Right cardiac atrium (tissue), 5 donors: ENCODE measurements at regions of chr7 and their contacts with region 1.

Region 1: DNA sequence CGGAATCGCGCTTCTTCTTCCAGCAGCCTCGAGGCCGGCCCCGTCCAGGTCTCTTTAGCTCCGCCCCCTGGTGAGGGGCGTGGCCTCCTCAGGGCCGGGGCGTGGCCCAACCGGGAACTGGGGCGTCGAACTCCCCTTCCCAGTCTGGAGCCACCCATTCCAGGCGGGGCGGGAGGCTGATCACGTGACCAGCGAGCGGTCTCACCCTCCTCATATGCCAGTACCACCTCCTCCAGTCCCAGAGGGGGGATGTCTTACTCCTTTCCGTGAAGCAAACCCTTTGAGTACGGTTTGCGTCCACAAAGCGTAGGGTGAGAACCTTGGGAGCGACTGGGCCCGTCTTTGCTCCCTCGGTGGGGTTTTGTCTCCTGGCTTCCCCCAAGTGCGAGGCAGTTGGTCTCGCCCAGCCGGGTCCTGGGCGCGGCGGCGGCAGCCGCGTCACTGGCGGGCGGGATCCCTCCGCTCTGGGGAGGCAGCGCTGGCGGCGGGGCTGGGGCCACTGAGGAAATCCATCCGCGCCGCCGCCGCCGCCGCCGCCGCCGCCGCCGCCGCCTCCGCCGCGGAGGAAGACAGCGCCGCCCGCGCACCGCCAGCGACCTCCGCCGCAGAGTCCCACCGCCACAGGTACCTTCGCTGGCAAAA is at the start of gene GNB2:
- DNase-seq: peak; percentile 99 to 100 (median 100)
- ATAC-seq: peak; percentile 90 to 93
- H3K4me3 ChIP-seq: peak within 1 kb of the TSS; percentile 96
- H3K27ac ChIP-seq: peak within 1 kb of the TSS; percentile 96
- H3K4me1 ChIP-seq: no peaks in the 10 kb centered on the region
- H3K27me3 ChIP-seq: no peaks in the 10 kb centered on the region
- total RNA-seq, gene GNB2: 128 to 160 (median 132) TPM

Region 2: DNA sequence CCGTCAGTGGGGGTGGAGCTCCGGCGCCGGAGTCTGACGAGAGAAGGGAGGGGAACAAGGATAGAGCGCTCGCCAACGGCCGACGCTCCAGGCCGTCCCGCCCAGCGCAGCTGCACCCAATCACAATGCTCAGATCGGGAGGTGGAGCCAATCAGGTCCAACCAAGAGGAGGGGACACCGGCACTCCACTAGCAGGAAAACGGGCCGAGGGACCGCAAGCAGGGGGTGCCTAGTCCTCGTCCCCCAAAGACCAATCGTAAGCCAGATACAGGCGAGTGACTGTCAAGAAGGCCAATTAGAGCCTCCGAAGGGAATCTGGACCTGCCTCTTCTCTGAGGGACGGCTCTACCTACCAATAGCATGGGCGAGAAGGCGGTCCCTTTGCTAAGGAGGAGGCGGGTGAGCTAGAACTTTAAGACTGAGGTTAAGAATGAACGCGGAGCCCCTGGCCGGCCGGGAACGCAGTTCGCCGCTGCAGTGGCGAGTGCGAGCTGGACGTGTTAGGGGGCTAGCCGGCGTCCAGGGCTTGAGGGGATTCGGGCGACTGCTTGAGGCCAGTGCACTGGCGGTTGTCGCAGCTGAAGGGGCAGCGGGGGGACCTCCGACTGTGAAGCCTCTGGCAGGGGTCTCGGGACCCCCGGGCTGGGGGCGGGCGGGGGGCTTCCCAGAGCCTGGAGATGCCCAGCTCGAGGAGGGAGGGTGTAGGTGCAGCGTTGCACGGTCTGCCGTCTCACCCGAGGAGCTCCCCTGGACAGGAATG is 87.0 kb before region 1 on chr7 and contains the start of gene FBXO24:
- intact Hi-C with region 1: loop called in 1 of 4 experiments (anchors 10 kb)
- DNase-seq: peak; percentile 100
- ATAC-seq: peak; percentile 94 to 97
- H3K4me3 ChIP-seq: peak within 1 kb of the TSS; percentile 76
- H3K27ac ChIP-seq: peak within 1 kb of the TSS; percentile 93
- H3K4me1 ChIP-seq: peaks cover 2% of the 10 kb centered on the region
- H3K27me3 ChIP-seq: no peaks in the 10 kb centered on the region
- total RNA-seq, gene FBXO24: 0.74 to 1.0 (median 0.76) TPM in 3 of 4 donors, not detected in the other

Region 3: GRCh38 chr7:100611974-100612729 is 61.3 kb before region 1 on chr7 and contains the start of gene MOSPD3:
- intact Hi-C with region 1: loop called in 2 of 4 experiments (anchors 5 to 10 kb)
- DNase-seq: peak; percentile 99
- ATAC-seq: peak; percentile 98 to 99
- H3K4me3 ChIP-seq: peak within 1 kb of the TSS; percentile 87
- H3K27ac ChIP-seq: peak within 1 kb of the TSS; percentile 89
- H3K4me1 ChIP-seq: peaks cover 3% of the 10 kb centered on the region
- H3K27me3 ChIP-seq: no peaks in the 10 kb centered on the region
- total RNA-seq, gene MOSPD3: 11.1 to 13.7 (median 11.9) TPM

Region 4: DNA sequence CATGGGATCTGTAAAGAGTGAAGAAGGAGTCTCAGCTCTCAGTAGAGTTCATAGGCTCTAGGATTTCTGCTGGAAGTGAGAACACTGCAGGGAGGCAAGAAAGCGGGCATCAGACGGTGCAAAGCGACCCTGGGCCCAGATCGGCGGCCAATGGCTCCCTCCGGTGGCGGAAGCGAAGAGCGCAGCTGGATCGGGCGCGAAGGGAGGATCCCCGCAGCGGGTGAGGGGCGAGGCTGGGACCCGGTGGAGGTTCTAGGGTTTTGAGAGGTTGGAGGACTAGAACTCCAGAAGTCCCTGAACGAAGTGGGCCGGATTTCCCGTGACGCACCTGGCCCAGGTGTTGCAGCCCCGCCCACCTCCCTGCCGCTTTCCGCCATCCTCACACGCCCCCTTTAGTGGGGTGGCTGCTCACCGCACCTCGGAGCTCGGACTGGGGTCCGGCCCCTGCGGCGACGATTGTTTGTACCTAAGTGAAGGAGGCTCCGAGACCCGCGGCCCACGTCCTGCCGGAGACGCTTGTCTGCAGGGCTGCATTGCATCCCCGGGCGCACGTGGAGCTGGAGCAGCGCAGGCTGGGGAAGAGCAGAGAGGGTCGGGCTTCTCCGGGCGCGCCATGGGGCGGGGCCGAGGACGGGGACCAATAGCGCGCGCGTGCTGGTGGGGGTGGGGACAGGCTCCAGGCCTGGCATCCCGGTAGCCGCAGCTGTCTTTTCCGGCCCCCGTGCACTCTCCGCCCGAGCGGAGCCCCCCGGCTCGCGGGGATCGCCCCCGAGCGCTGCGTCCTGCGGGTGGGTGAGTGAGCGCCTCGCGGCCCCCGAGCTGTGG is 178.8 kb after region 1 on chr7 and contains the start of gene SLC12A9:
- intact Hi-C with region 1: no loop called
- DNase-seq: peak; percentile 94 to 97 (median 97)
- ATAC-seq: peak; percentile 99
- H3K4me3 ChIP-seq: peak within 1 kb of the TSS; percentile 55
- H3K27ac ChIP-seq: no peak within 1 kb of the TSS
- H3K4me1 ChIP-seq: no peaks in the 10 kb centered on the region
- H3K27me3 ChIP-seq: no peaks in the 10 kb centered on the region
- total RNA-seq, gene SLC12A9: 9.3 to 16.9 (median 12.6) TPM

Region 5: DNA sequence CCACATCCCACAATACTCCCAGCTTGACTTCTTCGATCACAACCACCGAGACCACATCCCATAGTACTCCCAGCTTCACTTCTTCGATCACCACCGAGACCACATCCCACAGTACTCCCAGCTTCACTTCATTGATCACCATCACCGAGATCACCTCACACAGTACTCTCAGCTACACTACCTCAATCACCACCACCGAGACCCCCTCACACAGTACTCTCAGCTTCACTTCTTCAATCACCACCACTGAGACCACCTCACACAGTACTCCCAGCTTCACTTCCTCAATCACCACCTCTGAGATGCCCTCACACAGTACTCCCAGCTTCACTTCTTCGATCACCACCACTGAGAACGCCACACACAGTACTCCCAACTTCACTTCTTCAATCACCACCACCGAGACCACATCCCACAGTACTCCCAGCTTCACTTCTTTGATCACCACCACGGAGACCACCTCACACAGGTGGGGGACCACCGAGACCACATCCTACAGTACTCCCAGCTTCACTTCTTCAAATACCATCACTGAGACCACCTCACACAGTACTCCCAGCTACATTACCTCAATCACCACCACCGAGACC is 284.5 kb after region 1 on chr7:
- intact Hi-C with region 1: no loop called
- DNase-seq: no peak
- ATAC-seq: peak in 1 of 2 donors; percentile 12
- H3K4me3 ChIP-seq: no peak overlapping the region
- H3K27ac ChIP-seq: no peak overlapping the region
- H3K4me1 ChIP-seq: no peaks in the 10 kb centered on the region
- H3K27me3 ChIP-seq: no peaks in the 10 kb centered on the region